Heart left ventricle (tissue), 16 donors: ENCODE measurements at regions of chr1 and their contacts with region 1.

Region 1: GRCh38 chr1:231847612-231848397 is 221.2 kb downstream of the DISC1 start:
- DNase-seq: peak in 3 of 5 donors; percentile 38 to 80 (median 65)
- ATAC-seq: peak; percentile 65 to 82 (median 76)
- H3K4me3 ChIP-seq: peak overlapping the region; percentile 33 to 67 (median 52)
- H3K27ac ChIP-seq: peak overlapping the region; percentile 46 to 91 (median 77)
- H3K4me1 ChIP-seq: peaks cover 0 to 35% (median 15%) of the 10 kb centered on the region in 12 donors
- H3K27me3 ChIP-seq: no peaks in the 10 kb centered on the region
- CTCF ChIP-seq: no peak
- POLR2A ChIP-seq: peak in 1 of 2 donors; percentile 35

Region 2: GRCh38 chr1:232319072-232319471 is 471.3 kb after region 1 on chr1:
- intact Hi-C with region 1: loop called in 1 of 10 experiments (anchors 1 kb)
- DNase-seq: peak; percentile 87 to 95 (median 89)
- ATAC-seq: peak; percentile 95 to 96 (median 96)
- H3K4me3 ChIP-seq: no peak overlapping the region
- H3K27ac ChIP-seq: peak overlapping the region in 11 of 12 donors; percentile 5 to 95 (median 79)
- H3K4me1 ChIP-seq: peaks cover 0 to 17% (median 11%) of the 10 kb centered on the region in 12 donors
- H3K27me3 ChIP-seq: no peaks in the 10 kb centered on the region
- CTCF ChIP-seq: no peak
- POLR2A ChIP-seq: no peak